ENCODE measurements at regions of chr12 and their contacts with region 1.

Region 1: DNA sequence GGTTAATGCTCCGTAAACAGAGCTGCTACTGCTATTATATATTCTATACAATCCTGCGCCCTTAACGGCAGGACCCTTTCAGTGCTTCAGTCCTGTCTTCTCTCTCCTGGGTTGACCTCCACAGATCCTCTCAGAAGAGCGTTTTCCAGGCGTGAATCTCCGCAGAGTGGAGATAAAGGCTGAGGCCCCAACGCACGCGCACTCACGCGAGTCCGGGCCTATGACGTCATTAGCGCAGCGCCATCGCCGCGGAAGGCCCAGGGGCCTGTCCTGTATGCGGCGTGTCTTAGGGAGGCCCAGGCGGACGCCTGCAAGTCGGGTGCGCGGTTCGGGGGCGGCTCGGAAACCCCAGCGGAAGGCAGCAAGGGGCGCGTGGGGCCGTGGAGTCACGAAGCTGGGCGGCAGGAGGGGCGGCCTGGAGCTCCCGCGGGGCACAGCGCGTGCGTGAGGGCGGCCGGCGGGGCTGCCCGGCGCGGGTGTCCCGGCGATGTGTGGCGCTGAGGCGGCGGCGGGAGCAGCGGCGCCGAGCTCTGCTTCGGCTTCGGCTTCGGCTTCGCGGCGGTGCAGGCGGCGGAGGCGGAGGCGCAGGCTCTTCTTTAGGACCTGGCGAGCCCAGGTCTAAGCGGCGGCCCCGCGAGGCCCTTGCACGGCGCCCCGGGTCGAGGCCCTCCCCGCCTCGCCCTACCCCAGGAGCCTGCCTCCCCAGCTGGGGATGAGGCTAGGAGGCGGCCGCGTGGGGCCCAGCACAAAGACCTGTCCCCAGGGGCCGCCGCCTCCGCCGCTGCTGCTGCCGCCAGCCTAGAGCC is at the start of gene MAPKAPK5:
- DNase-seq: peak; percentile 96 to 98
- ATAC-seq: peak; percentile 98
- H3K4me3 ChIP-seq: peak within 1 kb of the TSS; percentile 85 to 92
- H3K27ac ChIP-seq: peak within 1 kb of the TSS; percentile 46 to 79
- H3K4me1 ChIP-seq: no peaks in the 10 kb centered on the region
- H3K27me3 ChIP-seq: no peaks in the 10 kb centered on the region
- total RNA-seq, gene MAPKAPK5: 36.4 to 44.4 TPM

Region 2: DNA sequence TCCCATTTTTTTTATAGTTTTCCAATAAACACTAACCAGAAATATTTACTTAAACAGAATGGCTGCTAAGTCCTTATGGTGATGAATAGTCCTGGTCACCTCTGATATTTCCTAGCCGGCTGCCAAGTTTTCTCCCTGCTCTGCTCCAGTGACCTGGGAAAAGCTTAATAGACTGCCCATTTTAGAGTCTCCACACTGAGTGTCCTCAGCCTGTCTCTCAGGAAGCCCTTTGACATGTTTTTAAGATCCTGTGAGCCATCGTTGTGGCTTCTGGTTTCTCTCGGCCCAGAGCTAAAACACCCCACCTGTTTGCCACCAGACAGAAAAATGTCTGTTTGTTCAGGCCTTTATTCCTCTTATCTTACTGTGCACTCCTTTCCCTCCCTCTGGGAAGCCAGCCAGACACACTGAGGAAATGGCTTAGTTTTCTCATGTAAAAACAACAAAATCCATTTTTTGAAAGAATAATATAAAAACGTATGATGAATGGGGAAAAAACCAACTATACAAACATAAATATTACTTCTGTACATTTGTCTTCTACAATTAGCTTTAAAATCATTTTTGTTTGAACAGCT is 100.6 kb before region 1 on chr12:
- intact Hi-C with region 1: no loop called
- DNase-seq: no peak
- ATAC-seq: peak; percentile 54
- H3K4me3 ChIP-seq: no peak overlapping the region
- H3K27ac ChIP-seq: peak overlapping the region in 1 of 2 donors; percentile 20
- H3K4me1 ChIP-seq: peaks cover 0 to 2% of the 10 kb centered on the region in 2 donors
- H3K27me3 ChIP-seq: no peaks in the 10 kb centered on the region

Region 3: GRCh38 chr12:111766608-111767361 is 75.2 kb before region 1 on chr12 and contains the start of gene ALDH2:
- intact Hi-C with region 1: loop called in 1 of 2 experiments (anchors 5 kb)
- DNase-seq: peak; percentile 83 to 89
- ATAC-seq: peak; percentile 97
- H3K4me3 ChIP-seq: peak within 1 kb of the TSS; percentile 56 to 88
- H3K27ac ChIP-seq: peak within 1 kb of the TSS; percentile 34 to 53
- H3K4me1 ChIP-seq: no peaks in the 10 kb centered on the region
- H3K27me3 ChIP-seq: no peaks in the 10 kb centered on the region
- total RNA-seq, gene ALDH2: 114 to 134 TPM